Dorsolateral prefrontal cortex (tissue), 120 donors: ENCODE measurements at regions of chr3 and their contacts with region 1.

Region 1: GRCh38 chr3:117059067-117059955 is 349.7 kb downstream of the TUSC7 start:
- DNase-seq: no peak
- H3K4me3 ChIP-seq: peak overlapping the region in 49 of 59 donors; percentile 0 to 50 (median 30)
- H3K27ac ChIP-seq: peak overlapping the region in 40 of 59 donors; percentile 3 to 74 (median 42)
- H3K27me3 ChIP-seq: no peaks in the 10 kb centered on the region
- CTCF ChIP-seq: peak; percentile 58 to 96 (median 77)

Region 2: DNA sequence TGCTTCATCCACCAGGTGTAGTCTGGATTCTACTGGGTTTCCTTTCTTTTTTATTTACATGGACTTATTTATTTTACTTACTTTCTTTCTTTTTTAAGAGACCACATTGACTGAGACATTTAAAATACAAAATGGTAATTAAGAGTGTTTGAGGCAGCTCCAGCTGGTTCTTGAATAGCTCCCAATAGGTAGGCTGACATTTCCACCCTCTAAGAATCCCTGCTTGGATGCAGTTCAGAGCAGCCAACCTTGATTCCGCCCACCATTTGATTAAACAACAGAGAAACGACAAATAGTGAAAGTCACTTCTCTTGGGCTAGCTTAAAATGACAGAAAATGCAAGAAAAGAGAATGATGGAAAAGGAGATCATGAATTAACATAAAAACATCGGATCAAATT is 79.2 kb before region 1 on chr3:
- intact Hi-C with region 1: no loop called
- DNase-seq: no peak
- H3K4me3 ChIP-seq: no peak overlapping the region
- H3K27ac ChIP-seq: no peak overlapping the region
- H3K27me3 ChIP-seq: no peaks in the 10 kb centered on the region
- CTCF ChIP-seq: no peak

Region 3: GRCh38 chr3:117355566-117355965 is 296.3 kb after region 1 on chr3:
- intact Hi-C with region 1: loop called in 1 of 2 experiments (anchors 10 kb)
- DNase-seq: peak in 3 of 10 donors; percentile 3 to 32 (median 23)
- H3K4me3 ChIP-seq: no peak overlapping the region
- H3K27ac ChIP-seq: no peak overlapping the region
- H3K27me3 ChIP-seq: no peaks in the 10 kb centered on the region
- CTCF ChIP-seq: peak in 54 of 56 donors; percentile 35 to 83 (median 59)

Region 4: GRCh38 chr3:117399311-117400078 is 340.2 kb after region 1 on chr3:
- intact Hi-C with region 1: loop called in 1 of 2 experiments (anchors 5 kb)
- DNase-seq: peak in 1 of 10 donors; percentile 12
- H3K4me3 ChIP-seq: peak overlapping the region in 53 of 59 donors; percentile 8 to 60 (median 33)
- H3K27ac ChIP-seq: peak overlapping the region; percentile 23 to 93 (median 87)
- H3K27me3 ChIP-seq: no peaks in the 10 kb centered on the region
- CTCF ChIP-seq: peak in 2 of 56 donors; percentile 9 to 14

Region 5: GRCh38 chr3:117526470-117527079 is 467.3 kb after region 1 on chr3:
- intact Hi-C with region 1: loop called in 1 of 2 experiments (anchors 10 kb)
- DNase-seq: peak in 2 of 10 donors; percentile 49 to 75
- H3K4me3 ChIP-seq: no peak overlapping the region
- H3K27ac ChIP-seq: peak overlapping the region in 20 of 59 donors; percentile 2 to 59 (median 28)
- H3K27me3 ChIP-seq: no peaks in the 10 kb centered on the region
- CTCF ChIP-seq: peak; percentile 58 to 91 (median 79)